ENCODE measurements at regions of chr13 and their contacts with region 1.

Region 1: GRCh38 chr13:75372517-75372916 is 109.5 kb downstream of the TBC1D4 start:
- DNase-seq: no peak
- H3K4me3 ChIP-seq: no peak overlapping the region
- H3K27ac ChIP-seq: peak overlapping the region in 2 of 3 donors; percentile 15 to 21
- H3K4me1 ChIP-seq: peaks cover 26 to 40% of the 10 kb centered on the region in 2 donors
- H3K27me3 ChIP-seq: no peaks in the 10 kb centered on the region
- CTCF ChIP-seq: peak; percentile 56 to 78 (median 64)
- POLR2A ChIP-seq: no peak

Region 2: DNA sequence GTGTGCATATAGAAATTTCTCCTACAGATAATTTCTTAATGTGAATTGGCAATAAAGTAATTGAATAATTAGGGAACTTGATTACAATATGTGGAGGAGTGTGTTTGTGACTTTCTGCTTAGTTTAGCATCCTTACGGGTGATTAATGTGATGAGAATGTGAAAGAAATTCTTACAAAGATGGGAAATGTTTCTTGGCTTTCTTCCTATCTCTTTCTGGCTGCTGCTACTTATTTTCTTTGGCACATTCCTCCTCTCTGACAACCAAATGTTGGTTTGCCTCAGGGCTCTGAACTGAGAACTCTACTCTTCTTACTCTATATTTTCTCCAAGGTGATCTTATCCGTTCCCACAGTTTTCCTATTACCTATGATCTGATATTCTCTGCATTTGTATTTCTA is 190.6 kb before region 1 on chr13:
- intact Hi-C with region 1: no loop called
- DNase-seq: no peak
- H3K4me3 ChIP-seq: no peak overlapping the region
- H3K27ac ChIP-seq: no peak overlapping the region
- H3K4me1 ChIP-seq: peaks cover 2 to 7% of the 10 kb centered on the region in 2 donors
- H3K27me3 ChIP-seq: no peaks in the 10 kb centered on the region
- CTCF ChIP-seq: no peak
- POLR2A ChIP-seq: no peak

Region 3: DNA sequence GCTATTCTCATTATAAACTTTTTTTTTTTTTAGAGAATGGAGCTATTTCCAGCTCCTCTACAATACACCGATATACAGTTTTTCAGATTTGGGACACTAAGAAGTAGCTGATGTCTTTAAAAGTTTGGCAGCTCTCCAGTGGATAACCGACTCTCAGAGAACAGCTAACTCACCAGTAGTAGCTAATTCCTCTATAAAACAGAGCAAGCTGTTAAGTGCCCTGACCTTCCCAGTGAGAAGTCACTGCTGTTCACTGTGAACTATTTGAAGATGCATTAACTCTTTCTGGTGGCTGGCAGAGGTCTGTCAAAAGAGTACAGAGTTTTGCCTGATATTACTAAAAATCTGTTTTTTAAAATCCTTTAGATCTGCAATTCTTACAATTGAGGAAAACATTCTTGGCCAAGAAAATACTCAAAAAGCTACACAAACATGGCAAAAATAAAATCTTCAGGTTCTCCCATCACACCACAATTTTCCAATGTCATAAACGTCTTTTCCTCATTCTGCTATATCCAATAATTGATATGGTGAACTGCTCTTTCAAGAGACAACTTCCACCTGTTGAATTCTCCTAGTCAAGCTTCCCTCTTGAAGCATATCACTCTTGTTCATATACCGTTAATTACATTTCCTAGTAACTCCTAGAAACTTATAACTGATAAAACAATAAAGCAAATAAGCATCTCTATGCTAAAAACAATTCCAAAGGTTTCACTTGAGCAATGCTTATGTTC is 65.2 kb after region 1 on chr13:
- intact Hi-C with region 1: loop called (anchors 10 kb)
- DNase-seq: no peak
- H3K4me3 ChIP-seq: no peak overlapping the region
- H3K27ac ChIP-seq: peak overlapping the region in 2 of 3 donors; percentile 21 to 32
- H3K4me1 ChIP-seq: peaks cover 11 to 30% of the 10 kb centered on the region in 2 donors
- H3K27me3 ChIP-seq: no peaks in the 10 kb centered on the region
- CTCF ChIP-seq: no peak
- POLR2A ChIP-seq: no peak

Region 4: DNA sequence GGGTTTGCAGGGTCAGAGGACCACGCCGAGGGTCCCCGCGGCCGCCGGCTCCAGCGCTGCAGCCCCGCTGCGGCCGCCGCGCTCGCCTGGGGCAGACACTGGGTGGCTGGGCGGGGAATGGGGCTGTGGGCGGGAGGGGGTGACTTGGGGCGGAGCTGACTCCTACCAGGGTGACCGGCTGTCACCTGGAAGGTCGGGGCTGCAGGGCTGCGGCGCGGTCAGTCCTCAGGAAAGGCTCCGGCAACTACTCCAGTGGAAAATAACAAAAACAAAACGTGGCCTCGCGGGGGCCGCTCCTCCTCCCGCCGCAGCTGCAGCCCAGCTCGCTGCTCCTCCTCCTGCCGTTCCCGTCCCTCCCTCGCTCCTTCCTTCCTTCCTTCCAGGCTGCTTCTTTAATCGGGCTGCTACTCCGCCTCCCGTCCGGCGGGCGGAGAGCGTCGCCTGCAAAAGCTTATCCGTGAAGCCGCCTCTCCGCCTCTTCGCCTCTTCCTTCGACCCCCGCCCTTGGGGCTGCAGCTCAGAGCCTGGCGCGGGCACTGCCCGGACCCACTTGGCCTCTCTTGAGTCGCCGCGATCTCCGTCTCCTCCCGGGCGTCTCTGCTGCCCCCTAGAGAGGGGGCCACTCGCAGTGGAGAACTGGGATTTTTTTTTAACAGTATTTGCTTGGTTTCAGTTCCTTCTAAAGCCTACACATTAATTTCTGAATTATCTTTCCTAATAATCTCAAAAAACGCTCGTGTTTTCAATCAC is 109.7 kb after region 1 on chr13 and contains the start of gene TBC1D4:
- intact Hi-C with region 1: loop called (anchors 5 kb)
- DNase-seq: peak; percentile 97
- H3K4me3 ChIP-seq: peak within 1 kb of the TSS; percentile 71 to 89 (median 76)
- H3K27ac ChIP-seq: peak within 1 kb of the TSS; percentile 80 to 95 (median 87)
- H3K4me1 ChIP-seq: peaks cover 28 to 42% of the 10 kb centered on the region in 2 donors
- H3K27me3 ChIP-seq: no peaks in the 10 kb centered on the region
- CTCF ChIP-seq: peak; percentile 47 to 88 (median 83)
- POLR2A ChIP-seq: peak in 1 of 2 donors; percentile 82
- total RNA-seq, gene TBC1D4: 42.5 to 72.6 (median 70.6) TPM